Motor neuron (in vitro differentiated cells): ENCODE measurements at regions of chr2 and their contacts with region 1.

Region 1: DNA sequence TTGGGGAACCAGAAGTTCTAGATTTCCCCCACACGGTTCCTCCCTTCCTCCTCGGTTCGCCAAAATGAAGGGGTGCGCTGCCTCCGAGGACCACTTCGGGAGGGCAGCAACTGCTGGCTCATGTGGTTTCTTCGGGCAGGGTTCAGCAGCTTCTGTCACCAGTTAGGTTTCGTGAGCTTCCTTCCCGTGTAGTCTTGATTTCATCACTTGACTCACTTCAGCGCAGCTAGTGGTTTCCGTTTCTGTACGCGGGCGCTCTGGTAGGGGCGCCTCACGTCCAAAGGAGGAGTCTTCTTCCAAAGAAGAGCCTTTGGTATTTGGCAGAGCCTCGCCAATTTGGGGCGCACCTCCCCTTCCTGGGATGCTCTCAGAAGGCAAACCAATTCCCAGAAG is 485 bp upstream of the GALNT3 start:
- ATAC-seq: peak in 5 of 8 experiments; percentile 13 to 73 (median 44)
- H3K4me3 ChIP-seq: peak overlapping the region in 1 of 5 donors; percentile 47
- H3K27ac ChIP-seq: no peak overlapping the region
- H3K4me1 ChIP-seq: no peaks in the 10 kb centered on the region

Region 2: GRCh38 chr2:164992818-164993217 is 801.7 kb before region 1 on chr2:
- in situ Hi-C with region 1: loop called in 1 of 9 experiments (anchors 25 kb)
- ATAC-seq: peak; percentile 66 to 83 (median 78)
- H3K4me3 ChIP-seq: no peak overlapping the region
- H3K27ac ChIP-seq: no peak overlapping the region
- H3K4me1 ChIP-seq: no peaks in the 10 kb centered on the region

Region 3: DNA sequence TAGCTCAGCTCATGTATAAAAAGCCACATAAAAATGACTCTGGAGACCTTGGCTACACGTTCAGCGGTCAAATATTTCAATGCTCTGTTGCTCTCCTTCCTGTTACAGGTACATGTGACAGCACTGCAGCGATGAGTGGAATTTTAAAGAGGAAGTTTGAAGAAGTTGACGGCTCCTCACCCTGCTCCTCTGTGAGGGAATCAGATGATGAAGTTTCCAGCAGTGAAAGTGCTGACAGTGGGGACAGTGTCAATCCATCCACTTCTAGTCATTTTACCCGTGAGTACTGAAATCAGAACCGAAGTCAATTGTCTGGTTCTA is 199.6 kb before region 1 on chr2:
- in situ Hi-C with region 1: loop called in 1 of 9 experiments (anchors 25 kb)
- ATAC-seq: no peak
- H3K4me3 ChIP-seq: no peak overlapping the region
- H3K27ac ChIP-seq: no peak overlapping the region
- H3K4me1 ChIP-seq: no peaks in the 10 kb centered on the region

Region 4: DNA sequence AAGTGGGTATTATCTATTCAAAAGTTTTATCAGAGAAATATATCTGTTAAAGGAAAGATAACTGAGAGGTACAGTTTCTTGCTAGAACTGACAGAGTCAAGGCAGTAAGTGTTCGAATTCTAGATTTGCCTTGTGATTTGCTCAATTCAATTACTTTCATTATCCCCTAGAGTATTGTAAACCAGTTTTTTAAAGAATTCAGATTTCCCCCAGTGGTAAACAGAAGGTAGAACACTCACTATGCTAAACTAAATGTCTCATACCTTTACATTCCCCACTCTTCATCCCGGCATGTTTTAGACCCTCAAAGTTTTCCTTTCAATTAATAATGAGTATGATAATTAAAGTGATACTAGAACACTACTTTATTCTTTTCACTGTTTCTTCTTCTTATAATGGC is 130.4 kb after region 1 on chr2:
- in situ Hi-C with region 1: no loop called
- ATAC-seq: no peak
- H3K4me3 ChIP-seq: no peak overlapping the region
- H3K27ac ChIP-seq: no peak overlapping the region
- H3K4me1 ChIP-seq: no peaks in the 10 kb centered on the region

Region 5: GRCh38 chr2:166424841-166425240 is 630.3 kb after region 1 on chr2:
- in situ Hi-C with region 1: no loop called
- ATAC-seq: no peak
- H3K4me3 ChIP-seq: no peak overlapping the region
- H3K27ac ChIP-seq: no peak overlapping the region
- H3K4me1 ChIP-seq: no peaks in the 10 kb centered on the region